B cell (primary cell): ENCODE measurements at regions of chr5 and their contacts with region 1.

Region 1: GRCh38 chr5:77638763-77639671 is 504 bp upstream of the OTP start:
- DNase-seq: peak; percentile 47
- ATAC-seq: peak; percentile 21
- H3K4me3 ChIP-seq: peak overlapping the region in 1 of 5 experiments; percentile 3
- H3K4me3 Mint-ChIP-seq: no peak overlapping the region
- H3K27ac ChIP-seq: no peak overlapping the region
- H3K27ac Mint-ChIP-seq: peak overlapping the region; percentile 66
- H3K4me1 ChIP-seq: peaks cover 31 to 71% of the 10 kb centered on the region in 2 donors
- H3K4me1 Mint-ChIP-seq: peaks cover 11% of the 10 kb centered on the region
- H3K27me3 ChIP-seq: peaks cover 0 to 96% (median 92%) of the 10 kb centered on the region in 4 experiments
- H3K27me3 Mint-ChIP-seq: peaks cover 69% of the 10 kb centered on the region
- CTCF ChIP-seq: no peak

Region 2: GRCh38 chr5:78050888-78051287 is 411.9 kb after region 1 on chr5:
- CTCF ChIA-PET with region 1: no interaction called
- POLR2A ChIA-PET with region 1: interaction called, 10 read pairs
- intact Hi-C with region 1: no loop called
- DNase-seq: no peak
- ATAC-seq: no peak
- H3K4me3 ChIP-seq: no peak overlapping the region
- H3K4me3 Mint-ChIP-seq: no peak overlapping the region
- H3K27ac ChIP-seq: no peak overlapping the region
- H3K27ac Mint-ChIP-seq: no peak overlapping the region
- H3K4me1 ChIP-seq: no peaks in the 10 kb centered on the region
- H3K4me1 Mint-ChIP-seq: no peaks in the 10 kb centered on the region
- H3K27me3 ChIP-seq: no peaks in the 10 kb centered on the region
- H3K27me3 Mint-ChIP-seq: no peaks in the 10 kb centered on the region
- CTCF ChIP-seq: no peak